Activated T-helper 1 cell treated with anti-CD3 and anti-CD28 coated beads, Interleukin-12 subunit alpha, Interleukin-12 subunit beta, Interleukin-2, Interleukin-4 antibody, amounts not matched to agents 30 ng/mL and 10 ng/mL and 1 ng/mL, durations not matched to agents 14 hours and 24 hours and 36 hours (primary cell): ENCODE measurements at regions of chr22 and their contacts with region 1.

Region 1: GRCh38 chr22:24525416-24526037 is 29.4 kb downstream of the GUCD1 start:
- DNase-seq: peak; percentile 73
- H3K4me3 Mint-ChIP-seq: no peak overlapping the region
- H3K27ac Mint-ChIP-seq: no peak overlapping the region
- H3K4me1 Mint-ChIP-seq: peaks cover 14% of the 10 kb centered on the region
- H3K27me3 Mint-ChIP-seq: peaks cover 2% of the 10 kb centered on the region

Region 2: GRCh38 chr22:23984430-23984829 is 541.1 kb before region 1 on chr22:
- intact Hi-C with region 1: loop called (anchors 5 kb)
- DNase-seq: peak; percentile 43
- H3K4me3 Mint-ChIP-seq: no peak overlapping the region
- H3K27ac Mint-ChIP-seq: no peak overlapping the region
- H3K4me1 Mint-ChIP-seq: peaks cover 11% of the 10 kb centered on the region
- H3K27me3 Mint-ChIP-seq: peaks cover 3% of the 10 kb centered on the region

Region 3: GRCh38 chr22:24189249-24190158 is 336.0 kb before region 1 on chr22:
- intact Hi-C with region 1: loop called (anchors 2 kb)
- DNase-seq: peak; percentile 53
- H3K4me3 Mint-ChIP-seq: no peak overlapping the region
- H3K27ac Mint-ChIP-seq: peak overlapping the region; percentile 28
- H3K4me1 Mint-ChIP-seq: peaks cover 8% of the 10 kb centered on the region
- H3K27me3 Mint-ChIP-seq: no peaks in the 10 kb centered on the region

Region 4: DNA sequence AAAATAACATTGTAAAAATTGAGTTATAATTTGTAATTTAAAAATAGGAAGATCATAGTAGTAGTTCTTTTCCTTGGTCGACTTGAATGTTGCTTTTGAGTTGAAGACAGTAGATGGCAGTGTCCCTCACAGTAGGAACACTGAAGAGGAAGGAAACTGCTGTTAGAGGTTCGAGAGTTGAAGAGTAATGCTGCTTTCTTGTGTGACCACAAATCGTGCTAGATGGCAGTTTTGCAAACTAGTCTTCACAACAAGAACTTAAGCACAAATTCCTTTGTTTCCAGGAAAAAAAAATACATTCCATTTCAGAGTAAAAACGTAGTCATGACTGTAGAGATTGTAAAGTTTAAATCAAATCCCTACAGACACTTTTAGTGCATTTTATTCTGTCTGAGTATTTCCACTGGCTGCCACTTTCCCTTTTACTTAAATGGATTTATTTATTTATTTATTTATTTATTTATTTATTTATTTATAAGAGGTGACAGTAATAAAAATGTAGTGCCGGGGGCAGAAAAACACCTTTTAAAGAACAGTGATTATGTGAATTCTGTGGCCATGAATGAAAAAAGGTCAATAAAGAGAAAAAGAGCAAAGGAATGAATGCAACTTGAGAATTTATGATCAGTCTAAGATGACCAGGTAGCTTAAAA is 200.3 kb before region 1 on chr22:
- intact Hi-C with region 1: loop called (anchors 1 kb)
- DNase-seq: peak; percentile 22
- H3K4me3 Mint-ChIP-seq: no peak overlapping the region
- H3K27ac Mint-ChIP-seq: peak overlapping the region; percentile 1
- H3K4me1 Mint-ChIP-seq: peaks cover 45% of the 10 kb centered on the region
- H3K27me3 Mint-ChIP-seq: no peaks in the 10 kb centered on the region

Region 5: GRCh38 chr22:24423519-24424000 is 102.0 kb before region 1 on chr22:
- intact Hi-C with region 1: loop called (anchors 1 kb)
- DNase-seq: peak; percentile 64
- H3K4me3 Mint-ChIP-seq: peak overlapping the region; percentile 80
- H3K27ac Mint-ChIP-seq: no peak overlapping the region
- H3K4me1 Mint-ChIP-seq: peaks cover 31% of the 10 kb centered on the region
- H3K27me3 Mint-ChIP-seq: peaks cover 5% of the 10 kb centered on the region

Region 6: DNA sequence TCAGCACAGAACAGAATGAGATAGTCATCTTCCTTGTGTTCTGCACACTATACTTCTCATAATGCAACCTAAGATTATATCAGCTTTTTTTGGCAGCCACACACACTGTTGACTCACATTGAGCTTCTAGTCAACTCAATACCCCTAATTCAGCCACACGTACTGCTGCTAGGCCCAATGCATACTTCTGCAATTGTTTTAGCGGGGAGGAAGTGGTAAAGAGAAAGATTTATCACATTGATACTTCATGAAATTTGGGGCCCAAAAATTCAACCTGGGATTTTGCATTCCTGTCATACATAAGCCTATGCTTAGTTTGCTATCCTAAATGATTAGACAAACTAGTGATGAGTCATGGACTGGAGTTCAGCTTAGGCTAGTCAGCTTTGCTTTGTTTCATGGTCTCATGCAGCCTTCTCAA is 39.0 kb before region 1 on chr22:
- intact Hi-C with region 1: loop called (anchors 1 kb)
- DNase-seq: peak; percentile 17
- H3K4me3 Mint-ChIP-seq: no peak overlapping the region
- H3K27ac Mint-ChIP-seq: peak overlapping the region; percentile 63
- H3K4me1 Mint-ChIP-seq: peaks cover 21% of the 10 kb centered on the region
- H3K27me3 Mint-ChIP-seq: peaks cover 9% of the 10 kb centered on the region

Region 7: DNA sequence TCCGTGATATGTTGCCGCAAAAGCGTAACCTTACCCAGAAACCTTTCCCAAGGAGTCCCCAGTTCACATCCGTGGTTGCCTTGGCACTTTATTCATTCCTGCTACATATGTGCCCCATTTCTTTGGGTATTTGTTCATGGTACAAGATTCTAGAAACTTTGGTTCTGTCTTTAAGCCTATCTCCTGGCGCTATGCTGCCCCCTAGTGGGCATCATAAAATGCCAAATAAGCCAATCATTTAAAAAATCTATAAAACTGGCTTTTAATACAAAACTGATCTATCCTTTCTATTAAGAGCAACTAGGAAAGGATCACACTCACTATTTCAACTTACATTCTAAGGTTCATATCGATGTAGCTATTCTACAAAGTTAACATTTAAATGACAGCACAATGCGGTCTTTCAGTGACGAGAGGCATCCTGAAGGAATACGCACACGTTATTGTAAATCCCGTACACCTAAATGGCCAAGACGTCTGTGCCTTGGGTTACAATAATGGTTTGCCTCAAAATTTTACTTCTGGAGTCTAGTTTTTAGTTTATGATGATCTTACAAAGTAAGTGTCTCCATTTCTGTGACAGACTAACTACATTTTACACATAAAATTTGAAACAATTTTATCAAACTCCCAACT is 232.8 kb after region 1 on chr22:
- intact Hi-C with region 1: loop called (anchors 1 kb)
- DNase-seq: peak; percentile 13
- H3K4me3 Mint-ChIP-seq: no peak overlapping the region
- H3K27ac Mint-ChIP-seq: no peak overlapping the region
- H3K4me1 Mint-ChIP-seq: no peaks in the 10 kb centered on the region
- H3K27me3 Mint-ChIP-seq: peaks cover 15% of the 10 kb centered on the region